Gastrocnemius medialis (tissue), 4 donors: ENCODE measurements at regions of chr13 and their contacts with region 1.

Region 1: DNA sequence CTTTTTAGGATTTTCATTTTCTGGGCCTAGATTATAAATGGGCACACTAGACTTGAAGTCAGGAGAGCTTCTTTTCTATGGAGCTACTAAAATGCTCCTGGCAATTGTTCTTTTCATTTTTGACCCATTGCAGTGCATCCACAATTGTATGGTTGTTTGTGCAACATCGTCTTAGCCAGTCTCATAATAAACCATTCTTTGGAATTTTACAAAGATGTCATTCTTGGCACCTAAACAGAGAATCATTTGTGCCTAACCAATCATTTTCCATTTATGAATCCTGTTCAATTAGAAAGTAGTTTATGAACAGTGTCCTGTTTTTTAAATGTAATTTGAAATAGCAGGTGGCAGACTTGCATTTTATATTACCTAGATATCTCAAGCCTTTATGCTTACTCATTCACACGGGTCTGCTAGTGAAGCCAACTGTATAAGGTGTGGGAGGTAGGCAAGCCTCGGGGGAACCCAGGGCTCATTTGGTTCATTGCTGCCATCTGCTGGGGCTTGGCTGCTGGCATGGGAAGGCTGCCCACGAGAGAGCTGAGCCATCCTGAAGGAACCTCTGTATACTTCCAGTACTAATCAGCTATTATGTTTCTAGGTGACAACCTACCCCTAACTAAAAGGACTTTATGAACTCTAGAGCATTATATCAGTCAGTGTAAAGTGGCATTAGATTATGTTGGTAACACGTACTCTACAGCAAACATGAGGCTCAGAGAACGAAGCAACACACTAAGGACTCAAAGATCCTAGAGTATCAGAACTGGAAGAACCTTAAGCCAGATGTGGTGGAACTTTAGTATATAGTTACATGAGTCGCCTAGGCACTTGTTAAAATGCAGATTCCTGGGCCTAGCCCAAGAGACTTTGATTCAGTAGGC is 60.0 kb downstream of the TPT1 start:
- DNase-seq: peak; percentile 55 to 77
- ATAC-seq: peak; percentile 93 to 99
- H3K4me3 ChIP-seq: no peak overlapping the region
- H3K27ac ChIP-seq: peak overlapping the region in 3 of 4 donors; percentile 3 to 41 (median 6)
- H3K4me1 ChIP-seq: peaks cover 0 to 12% of the 10 kb centered on the region in 2 donors
- H3K27me3 ChIP-seq: no peaks in the 10 kb centered on the region
- CTCF ChIP-seq: peak; percentile 57 to 77 (median 73)
- POLR2A ChIP-seq: no peak

Region 2: GRCh38 chr13:44969551-44970484 is 311.2 kb before region 1 on chr13:
- in situ Hi-C with region 1: no loop called
- intact Hi-C with region 1: no loop called
- DNase-seq: no peak
- ATAC-seq: peak; percentile 64 to 69
- H3K4me3 ChIP-seq: no peak overlapping the region
- H3K27ac ChIP-seq: peak overlapping the region; percentile 60 to 81 (median 79)
- H3K4me1 ChIP-seq: peaks cover 37 to 51% of the 10 kb centered on the region in 2 donors
- H3K27me3 ChIP-seq: no peaks in the 10 kb centered on the region
- CTCF ChIP-seq: peak; percentile 78 to 92 (median 82)
- POLR2A ChIP-seq: no peak

Region 3: GRCh38 chr13:45063261-45063860 is 217.6 kb before region 1 on chr13:
- in situ Hi-C with region 1: no loop called
- intact Hi-C with region 1: loop called (anchors 5 kb)
- DNase-seq: no peak
- ATAC-seq: no peak
- H3K4me3 ChIP-seq: no peak overlapping the region
- H3K27ac ChIP-seq: no peak overlapping the region
- H3K4me1 ChIP-seq: no peaks in the 10 kb centered on the region
- H3K27me3 ChIP-seq: no peaks in the 10 kb centered on the region
- CTCF ChIP-seq: no peak
- POLR2A ChIP-seq: no peak

Region 4: GRCh38 chr13:45119991-45120864 is 160.8 kb before region 1 on chr13 and contains the start of gene GTF2F2:
- in situ Hi-C with region 1: no loop called
- intact Hi-C with region 1: loop called (anchors 10 kb)
- DNase-seq: peak; percentile 73 to 84
- ATAC-seq: peak; percentile 93 to 95
- H3K4me3 ChIP-seq: peak within 1 kb of the TSS; percentile 58 to 87 (median 82)
- H3K27ac ChIP-seq: peak within 1 kb of the TSS; percentile 84 to 92 (median 86)
- H3K4me1 ChIP-seq: peaks cover 18 to 19% of the 10 kb centered on the region in 2 donors
- H3K27me3 ChIP-seq: no peaks in the 10 kb centered on the region
- CTCF ChIP-seq: peak in 1 of 5 experiments; percentile 21
- POLR2A ChIP-seq: peak; percentile 39 to 41
- total RNA-seq, gene GTF2F2: 11.5 to 16.9 (median 13.3) TPM

Region 5: DNA sequence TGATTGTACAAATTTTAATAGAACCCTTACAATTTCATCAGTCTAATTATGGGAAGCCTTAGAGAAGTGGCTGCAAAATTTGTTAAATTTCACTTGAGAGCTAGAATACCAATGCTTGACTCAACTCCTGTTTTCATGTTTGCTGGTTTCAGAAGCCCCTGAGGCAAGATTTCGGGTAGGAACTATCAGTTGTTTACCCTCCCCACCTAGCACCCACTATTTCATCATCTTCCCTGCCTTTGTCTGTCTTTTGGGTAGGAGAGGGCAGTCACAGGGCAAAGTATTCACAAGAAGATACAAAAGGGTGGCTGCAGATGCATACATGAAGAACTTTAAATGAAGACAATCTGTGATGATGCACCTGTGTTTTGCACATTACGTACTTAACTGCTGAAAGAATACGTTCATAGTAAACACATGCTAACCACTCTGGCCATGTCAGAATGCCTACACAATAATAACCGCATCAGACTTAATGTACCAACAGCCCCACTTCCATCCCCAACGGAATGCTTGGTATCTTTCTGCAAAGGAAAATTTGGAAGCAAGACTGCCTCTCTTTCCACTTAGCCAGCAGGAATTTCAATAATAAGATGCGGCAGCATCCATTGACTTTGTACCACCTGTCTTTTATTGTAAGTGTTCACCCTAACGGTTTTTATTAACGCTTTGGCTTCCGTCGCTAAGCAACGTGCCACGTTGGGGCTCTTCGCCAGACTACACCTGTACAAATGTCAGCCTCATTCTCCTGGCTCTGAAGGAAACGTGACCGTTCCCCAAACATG is 29.5 kb after region 1 on chr13:
- in situ Hi-C with region 1: no loop called
- intact Hi-C with region 1: loop called (anchors 2 kb)
- DNase-seq: no peak
- ATAC-seq: no peak
- H3K4me3 ChIP-seq: peak overlapping the region; percentile 39 to 56 (median 44)
- H3K27ac ChIP-seq: no peak overlapping the region
- H3K4me1 ChIP-seq: peaks cover 4 to 10% of the 10 kb centered on the region in 2 donors
- H3K27me3 ChIP-seq: no peaks in the 10 kb centered on the region
- CTCF ChIP-seq: no peak
- POLR2A ChIP-seq: no peak

Region 6: DNA sequence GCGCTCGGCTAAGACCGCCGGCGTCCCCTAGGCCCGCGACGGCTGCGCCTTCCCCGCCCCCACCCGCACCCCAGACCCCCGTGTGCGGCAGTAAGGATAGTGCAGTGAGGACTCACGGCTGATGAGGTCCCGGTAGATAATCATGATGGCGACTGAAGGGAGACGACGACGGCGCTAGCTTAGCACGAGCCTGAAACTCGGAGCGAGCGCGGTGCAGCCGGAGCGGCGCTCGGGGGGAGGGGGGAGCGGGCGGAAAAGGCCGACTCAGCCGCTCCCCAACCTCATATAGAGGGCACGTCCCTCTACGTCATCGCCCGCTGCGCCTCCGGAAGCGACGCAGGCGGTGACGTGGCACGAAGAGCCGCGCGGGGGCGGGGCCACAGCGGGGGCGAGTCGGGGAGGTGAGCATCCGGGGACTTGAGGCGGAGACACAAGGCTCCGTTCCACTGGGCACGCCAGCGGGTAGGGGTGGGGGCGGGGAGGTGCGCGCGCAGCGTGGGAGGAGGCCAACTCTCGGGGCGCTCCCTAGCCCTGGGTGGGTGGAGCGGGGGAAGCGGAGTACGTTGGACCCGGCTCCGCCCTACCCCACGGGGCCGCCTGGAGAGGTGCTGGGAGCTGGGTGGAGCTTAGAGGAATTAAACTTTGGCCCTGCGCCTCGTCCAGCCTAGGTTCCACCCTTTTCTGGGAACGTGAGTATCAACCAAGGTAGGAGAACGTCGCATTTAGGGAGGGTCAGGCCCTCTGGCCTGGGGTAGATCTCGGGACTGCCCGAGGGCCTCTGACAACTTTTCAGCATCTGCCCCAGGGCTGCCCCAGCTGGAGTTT is 60.1 kb after region 1 on chr13 and contains the start of gene TPT1:
- in situ Hi-C with region 1: no loop called
- intact Hi-C with region 1: no loop called
- DNase-seq: peak; percentile 99 to 100
- ATAC-seq: peak; percentile 78 to 84
- H3K4me3 ChIP-seq: peak within 1 kb of the TSS; percentile 73 to 100 (median 90)
- H3K27ac ChIP-seq: peak within 1 kb of the TSS; percentile 97 to 100 (median 99)
- H3K4me1 ChIP-seq: peaks cover 36 to 51% of the 10 kb centered on the region in 2 donors
- H3K27me3 ChIP-seq: no peaks in the 10 kb centered on the region
- CTCF ChIP-seq: peak in 1 of 5 experiments; percentile 11
- POLR2A ChIP-seq: peak; percentile 95 to 97
- total RNA-seq, gene TPT1: 4,595 to 7,577 (median 5,951) TPM